Endothelial cell of umbilical vein (primary cell): ENCODE measurements at regions of chr2 and their contacts with region 1.

Region 1: GRCh38 chr2:95389245-95390119 is 13.0 kb upstream of the FAHD2A start:
- DNase-seq: peak; percentile 50
- H3K4me3 ChIP-seq: no peak overlapping the region
- H3K27ac ChIP-seq: no peak overlapping the region
- H3K4me1 ChIP-seq: no peaks in the 10 kb centered on the region
- H3K27me3 ChIP-seq: no peaks in the 10 kb centered on the region
- CTCF ChIP-seq: peak; percentile 93 to 99
- POLR2A ChIP-seq: no peak

Region 2: DNA sequence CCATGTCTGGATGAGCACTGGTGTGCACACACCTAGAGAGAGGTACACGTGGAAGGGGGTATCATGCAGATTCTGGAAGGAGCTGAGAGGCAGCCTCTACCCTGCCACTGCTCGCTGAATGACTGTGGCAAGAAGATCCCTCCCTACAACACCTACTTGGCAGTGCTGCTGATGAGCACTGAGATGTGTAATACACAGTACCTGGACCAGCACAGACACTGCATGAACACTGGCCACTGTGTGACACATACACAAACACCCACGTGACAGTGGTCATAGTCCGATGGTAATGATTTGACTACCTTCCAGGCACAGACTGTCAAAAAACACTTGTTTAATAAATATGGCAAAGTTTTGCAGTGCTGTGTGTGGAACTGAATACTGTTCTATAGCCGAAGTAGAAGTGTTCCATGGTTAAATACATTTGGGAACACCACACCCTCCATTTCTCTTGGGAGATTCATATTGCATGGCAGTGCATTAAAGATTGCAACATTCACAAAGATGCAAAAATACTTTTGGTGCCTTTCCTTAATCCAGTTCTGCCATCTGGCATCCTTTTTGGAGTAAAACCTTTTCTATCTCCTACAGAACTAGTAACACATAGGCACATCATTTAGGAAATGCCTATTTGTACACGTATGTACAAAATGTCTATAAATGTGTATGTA is 297.5 kb before region 1 on chr2:
- CTCF ChIA-PET with region 1: no interaction called
- POLR2A ChIA-PET with region 1: no interaction called
- dilution Hi-C with region 1: no loop called
- intact Hi-C with region 1: no loop called
- DNase-seq: no peak
- H3K4me3 ChIP-seq: no peak overlapping the region
- H3K27ac ChIP-seq: no peak overlapping the region
- H3K4me1 ChIP-seq: no peaks in the 10 kb centered on the region
- H3K27me3 ChIP-seq: no peaks in the 10 kb centered on the region
- CTCF ChIP-seq: no peak
- POLR2A ChIP-seq: no peak

Region 3: GRCh38 chr2:95345566-95346230 is 43.8 kb before region 1 on chr2:
- CTCF ChIA-PET with region 1: interaction called, 19 read pairs
- POLR2A ChIA-PET with region 1: no interaction called
- dilution Hi-C with region 1: no loop called
- intact Hi-C with region 1: loop called (anchors 5 kb)
- DNase-seq: peak; percentile 66
- H3K4me3 ChIP-seq: peak overlapping the region; percentile 16 to 77 (median 32)
- H3K27ac ChIP-seq: no peak overlapping the region
- H3K4me1 ChIP-seq: peaks cover 7% of the 10 kb centered on the region
- H3K27me3 ChIP-seq: peaks cover 9 to 19% of the 10 kb centered on the region in 2 experiments
- CTCF ChIP-seq: peak; percentile 97 to 98
- POLR2A ChIP-seq: no peak

Region 4: GRCh38 chr2:95379371-95379831 is 10.1 kb before region 1 on chr2:
- CTCF ChIA-PET with region 1: interaction called, 28 read pairs
- POLR2A ChIA-PET with region 1: no interaction called
- dilution Hi-C with region 1: no loop called
- intact Hi-C with region 1: no loop called
- DNase-seq: no peak
- H3K4me3 ChIP-seq: no peak overlapping the region
- H3K27ac ChIP-seq: no peak overlapping the region
- H3K4me1 ChIP-seq: no peaks in the 10 kb centered on the region
- H3K27me3 ChIP-seq: no peaks in the 10 kb centered on the region
- CTCF ChIP-seq: peak; percentile 17 to 24
- POLR2A ChIP-seq: no peak

Region 5: GRCh38 chr2:95402370-95403203 is 13.1 kb after region 1 on chr2 and contains the start of gene FAHD2A:
- CTCF ChIA-PET with region 1: interaction called, 35 read pairs
- POLR2A ChIA-PET with region 1: no interaction called
- dilution Hi-C with region 1: no loop called
- intact Hi-C with region 1: loop called (anchors 1 kb)
- DNase-seq: peak; percentile 88
- H3K4me3 ChIP-seq: peak within 1 kb of the TSS; percentile 60 to 95 (median 73)
- H3K27ac ChIP-seq: peak within 1 kb of the TSS; percentile 85
- H3K4me1 ChIP-seq: peaks cover 13% of the 10 kb centered on the region
- H3K27me3 ChIP-seq: no peaks in the 10 kb centered on the region
- CTCF ChIP-seq: no peak
- POLR2A ChIP-seq: peak; percentile 85
- total RNA-seq, gene FAHD2A: 27.5 and 33.1 TPM in 2 replicates

Region 6: GRCh38 chr2:95728878-95729596 is 339.6 kb after region 1 on chr2:
- CTCF ChIA-PET with region 1: interaction called, 25 read pairs
- POLR2A ChIA-PET with region 1: no interaction called
- dilution Hi-C with region 1: no loop called
- intact Hi-C with region 1: loop called (anchors 1 kb)
- DNase-seq: peak; percentile 78
- H3K4me3 ChIP-seq: no peak overlapping the region
- H3K27ac ChIP-seq: no peak overlapping the region
- H3K4me1 ChIP-seq: no peaks in the 10 kb centered on the region
- H3K27me3 ChIP-seq: no peaks in the 10 kb centered on the region
- CTCF ChIP-seq: peak; percentile 34 to 48
- POLR2A ChIP-seq: no peak